ENCODE measurements at regions of chr16 and their contacts with region 1.

Region 1: DNA sequence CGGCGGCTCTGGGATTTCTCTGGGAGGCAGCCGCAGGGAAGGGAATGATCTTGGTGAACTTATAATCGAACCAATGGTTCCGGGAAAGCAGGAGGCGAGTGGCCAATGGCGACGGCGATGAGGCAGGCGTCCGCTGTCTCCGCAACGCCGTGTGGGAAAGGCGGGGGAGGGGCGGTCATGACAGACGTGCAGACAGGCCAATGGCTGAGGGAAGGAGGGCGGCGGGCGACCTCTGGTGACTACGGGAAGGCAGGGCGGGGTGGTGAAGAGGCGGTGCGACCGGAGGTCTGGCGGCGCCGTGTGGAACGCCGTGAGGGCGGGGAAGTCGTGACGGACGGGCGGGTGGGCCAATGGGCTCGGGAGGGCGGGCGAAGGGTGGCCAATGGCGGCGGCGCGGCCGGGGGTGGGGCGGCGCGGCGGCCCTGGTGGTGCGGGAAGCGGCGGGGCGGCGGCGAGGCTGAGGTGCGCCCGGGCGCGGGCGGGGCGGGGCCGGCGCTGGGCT is at the start of gene RAB40C:
- DNase-seq: peak; percentile 100
- total RNA-seq, gene RAB40C: 19.4 TPM

Region 2: DNA sequence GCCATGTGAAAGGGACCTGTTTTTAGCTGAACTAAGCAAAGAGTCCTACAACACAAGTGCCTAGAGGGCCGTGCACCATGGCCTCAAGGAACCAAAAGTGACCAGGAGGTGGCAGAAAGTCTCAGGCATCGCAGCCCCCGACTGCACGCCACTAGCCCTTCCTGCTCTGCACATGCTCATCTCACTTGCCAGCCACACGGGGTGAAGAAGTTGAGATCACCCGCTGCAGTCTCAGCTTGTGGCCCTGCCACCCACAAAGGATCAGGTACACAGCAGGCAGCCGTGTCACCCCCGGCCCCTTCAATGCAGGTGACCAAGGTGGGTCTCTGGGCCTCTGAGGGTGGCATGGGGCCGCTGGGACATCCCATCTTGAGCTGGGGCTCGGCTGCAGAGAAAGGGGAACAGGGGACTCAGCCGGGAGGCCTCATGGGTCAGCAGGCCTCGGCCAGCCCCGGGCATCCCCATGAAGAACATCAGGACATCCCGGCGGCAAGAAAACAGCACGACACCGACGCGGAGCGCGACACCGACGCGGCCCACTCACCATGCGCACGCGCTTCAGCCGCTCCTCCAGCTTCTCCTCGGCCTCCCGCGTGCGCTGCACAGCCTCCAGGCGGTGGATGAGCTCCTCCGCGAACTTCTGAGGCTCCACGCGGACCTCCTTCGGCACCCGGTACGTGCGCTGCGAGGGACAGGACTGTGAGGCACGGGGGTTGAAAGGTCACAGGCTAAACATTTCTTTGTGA is 285.8 kb before region 1 on chr16:
- intact Hi-C with region 1: no loop called
- DNase-seq: no peak

Region 3: GRCh38 chr16:660459-661183 is 70.9 kb after region 1 on chr16:
- intact Hi-C with region 1: loop called (anchors 5 kb)
- DNase-seq: peak; percentile 92

Region 4: GRCh38 chr16:679814-680622 is 90.3 kb after region 1 on chr16 and contains the start of gene STUB1:
- intact Hi-C with region 1: no loop called
- DNase-seq: peak; percentile 94
- total RNA-seq, gene STUB1: 110 TPM

Region 5: GRCh38 chr16:700684-701584 is 111.2 kb after region 1 on chr16:
- intact Hi-C with region 1: no loop called
- DNase-seq: no peak

Measured in cardiac septum (tissue), 1 donor.